B cell (primary cell): ENCODE measurements at regions of chr12 and their contacts with region 1.

Region 1: GRCh38 chr12:22518067-22518719 is 26.1 kb downstream of the C2CD5 start:
- DNase-seq: no peak
- ATAC-seq: no peak
- H3K4me3 ChIP-seq: no peak overlapping the region
- H3K4me3 Mint-ChIP-seq: no peak overlapping the region
- H3K27ac ChIP-seq: no peak overlapping the region
- H3K27ac Mint-ChIP-seq: no peak overlapping the region
- H3K4me1 ChIP-seq: no peaks in the 10 kb centered on the region
- H3K4me1 Mint-ChIP-seq: peaks cover 2% of the 10 kb centered on the region
- H3K27me3 ChIP-seq: no peaks in the 10 kb centered on the region
- H3K27me3 Mint-ChIP-seq: no peaks in the 10 kb centered on the region
- CTCF ChIP-seq: no peak

Region 2: GRCh38 chr12:22481547-22482104 is 36.6 kb before region 1 on chr12:
- CTCF ChIA-PET with region 1: no interaction called
- POLR2A ChIA-PET with region 1: no interaction called
- intact Hi-C with region 1: loop called (anchors 5 kb)
- DNase-seq: no peak
- ATAC-seq: no peak
- H3K4me3 ChIP-seq: no peak overlapping the region
- H3K4me3 Mint-ChIP-seq: no peak overlapping the region
- H3K27ac ChIP-seq: no peak overlapping the region
- H3K27ac Mint-ChIP-seq: no peak overlapping the region
- H3K4me1 ChIP-seq: no peaks in the 10 kb centered on the region
- H3K4me1 Mint-ChIP-seq: no peaks in the 10 kb centered on the region
- H3K27me3 ChIP-seq: no peaks in the 10 kb centered on the region
- H3K27me3 Mint-ChIP-seq: no peaks in the 10 kb centered on the region
- CTCF ChIP-seq: no peak